Activated CD8-positive, alpha-beta T cell treated with anti-CD3 and anti-CD28 coated beads, Interleukin-2, amount 10 ng/mL, durations not matched to agents 7 days and 5 days (primary cell): ENCODE measurements at regions of chr1 and their contacts with region 1.

Region 1: GRCh38 chr1:66503841-66504470 is 30.0 kb upstream of the SGIP1 start:
- DNase-seq: peak; percentile 50
- ATAC-seq: peak; percentile 61
- H3K4me3 Mint-ChIP-seq: no peak overlapping the region
- H3K27ac Mint-ChIP-seq: no peak overlapping the region
- H3K4me1 Mint-ChIP-seq: peaks cover 7% of the 10 kb centered on the region
- H3K27me3 Mint-ChIP-seq: peaks cover 14% of the 10 kb centered on the region

Region 2: DNA sequence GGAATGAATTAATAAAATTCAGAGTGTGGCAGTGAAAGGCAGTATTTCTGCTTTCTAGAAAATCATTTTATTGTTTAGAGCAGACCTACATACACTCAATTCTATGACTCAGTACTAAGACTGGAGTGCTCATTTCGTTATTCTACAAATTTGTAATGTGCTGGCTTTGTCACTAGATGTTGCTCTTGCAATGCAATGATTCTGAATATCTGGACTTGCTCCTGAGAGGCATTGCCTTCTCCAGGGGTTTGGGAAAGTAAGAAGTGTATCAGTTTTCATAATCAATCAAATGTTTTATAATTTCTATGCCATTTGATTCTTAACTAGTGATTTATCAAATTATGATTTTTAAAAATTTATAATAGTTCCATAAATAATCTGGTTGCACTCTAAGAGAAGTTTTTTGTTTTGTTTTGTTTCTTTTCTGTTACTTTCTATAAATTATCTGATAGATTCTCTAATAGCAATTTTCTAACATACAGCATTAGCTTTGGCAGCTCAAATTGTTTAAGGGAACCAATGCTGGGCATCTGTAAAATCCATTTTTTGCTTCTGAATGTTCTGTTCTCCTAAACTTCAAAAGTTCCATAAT is 250.5 kb before region 1 on chr1:
- CTCF ChIA-PET with region 1: interaction called, 12 read pairs
- POLR2A ChIA-PET with region 1: no interaction called
- DNase-seq: peak; percentile 46
- ATAC-seq: peak; percentile 83
- H3K4me3 Mint-ChIP-seq: no peak overlapping the region
- H3K27ac Mint-ChIP-seq: no peak overlapping the region
- H3K4me1 Mint-ChIP-seq: peaks cover 37% of the 10 kb centered on the region
- H3K27me3 Mint-ChIP-seq: no peaks in the 10 kb centered on the region

Region 3: DNA sequence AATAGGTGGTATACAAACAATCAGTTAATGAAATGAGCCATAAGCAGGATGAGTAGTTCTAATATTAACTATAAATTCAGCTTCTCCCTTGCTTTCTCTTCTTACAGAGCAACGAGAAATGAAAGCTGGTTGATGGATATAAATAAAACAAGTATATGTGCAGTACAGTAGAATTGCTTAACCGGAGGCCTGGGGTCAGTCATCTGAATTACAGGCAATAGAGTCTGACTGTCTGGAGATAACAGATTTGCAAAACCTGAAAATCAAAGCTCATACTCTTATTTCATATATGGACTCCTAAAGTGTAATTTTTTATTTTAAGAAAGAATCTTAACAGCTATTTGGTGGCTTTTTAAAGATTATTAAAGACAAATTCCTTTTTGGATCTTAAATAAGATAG is 13.1 kb before region 1 on chr1:
- CTCF ChIA-PET with region 1: interaction called, 12 read pairs
- POLR2A ChIA-PET with region 1: no interaction called
- DNase-seq: no peak
- ATAC-seq: no peak
- H3K4me3 Mint-ChIP-seq: no peak overlapping the region
- H3K27ac Mint-ChIP-seq: no peak overlapping the region
- H3K4me1 Mint-ChIP-seq: no peaks in the 10 kb centered on the region
- H3K27me3 Mint-ChIP-seq: peaks cover 3% of the 10 kb centered on the region

Region 4: GRCh38 chr1:66521721-66522365 is 17.9 kb after region 1 on chr1:
- CTCF ChIA-PET with region 1: interaction called, 16 read pairs
- POLR2A ChIA-PET with region 1: no interaction called
- DNase-seq: no peak
- ATAC-seq: no peak
- H3K4me3 Mint-ChIP-seq: no peak overlapping the region
- H3K27ac Mint-ChIP-seq: no peak overlapping the region
- H3K4me1 Mint-ChIP-seq: no peaks in the 10 kb centered on the region
- H3K27me3 Mint-ChIP-seq: no peaks in the 10 kb centered on the region

Region 5: DNA sequence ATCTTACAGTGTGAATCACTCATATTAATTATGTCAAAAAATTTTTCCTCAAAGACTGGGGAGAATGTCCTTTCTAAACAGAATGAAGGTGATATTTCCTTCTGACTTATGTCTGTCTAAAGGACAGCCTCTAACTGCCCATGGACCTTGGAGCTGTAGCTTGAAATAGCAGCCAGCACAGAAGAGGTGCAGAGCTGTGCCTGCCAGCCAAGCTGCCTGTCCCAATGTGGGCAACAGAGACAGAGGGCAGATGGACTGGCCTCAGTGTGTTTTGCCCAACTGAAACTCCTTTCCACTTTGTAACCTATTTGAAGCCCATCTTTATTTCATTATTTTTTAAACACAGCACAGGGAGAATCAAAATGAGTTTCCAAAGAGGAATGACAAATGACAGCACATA is 150.7 kb after region 1 on chr1:
- CTCF ChIA-PET with region 1: no interaction called
- POLR2A ChIA-PET with region 1: no interaction called
- DNase-seq: no peak
- ATAC-seq: no peak
- H3K4me3 Mint-ChIP-seq: no peak overlapping the region
- H3K27ac Mint-ChIP-seq: no peak overlapping the region
- H3K4me1 Mint-ChIP-seq: no peaks in the 10 kb centered on the region
- H3K27me3 Mint-ChIP-seq: peaks cover 13% of the 10 kb centered on the region